ENCODE measurements at regions of chr6 and their contacts with region 1.

Region 1: GRCh38 chr6:75208298-75209183 is 2.7 kb upstream of the COL12A1 start:
- DNase-seq: peak; percentile 83
- H3K4me3 ChIP-seq: peak overlapping the region; percentile 60
- H3K27ac ChIP-seq: peak overlapping the region; percentile 63
- H3K4me1 ChIP-seq: peaks cover 80% of the 10 kb centered on the region
- H3K27me3 ChIP-seq: peaks cover 51% of the 10 kb centered on the region
- CTCF ChIP-seq: peak; percentile 88

Region 2: GRCh38 chr6:73739096-73739495 is 1469.4 kb before region 1 on chr6:
- intact Hi-C with region 1: loop called (anchors 5 kb)
- DNase-seq: no peak
- H3K4me3 ChIP-seq: no peak overlapping the region
- H3K27ac ChIP-seq: peak overlapping the region; percentile 47
- H3K4me1 ChIP-seq: peaks cover 12% of the 10 kb centered on the region
- H3K27me3 ChIP-seq: no peaks in the 10 kb centered on the region
- CTCF ChIP-seq: peak; percentile 83

Region 3: DNA sequence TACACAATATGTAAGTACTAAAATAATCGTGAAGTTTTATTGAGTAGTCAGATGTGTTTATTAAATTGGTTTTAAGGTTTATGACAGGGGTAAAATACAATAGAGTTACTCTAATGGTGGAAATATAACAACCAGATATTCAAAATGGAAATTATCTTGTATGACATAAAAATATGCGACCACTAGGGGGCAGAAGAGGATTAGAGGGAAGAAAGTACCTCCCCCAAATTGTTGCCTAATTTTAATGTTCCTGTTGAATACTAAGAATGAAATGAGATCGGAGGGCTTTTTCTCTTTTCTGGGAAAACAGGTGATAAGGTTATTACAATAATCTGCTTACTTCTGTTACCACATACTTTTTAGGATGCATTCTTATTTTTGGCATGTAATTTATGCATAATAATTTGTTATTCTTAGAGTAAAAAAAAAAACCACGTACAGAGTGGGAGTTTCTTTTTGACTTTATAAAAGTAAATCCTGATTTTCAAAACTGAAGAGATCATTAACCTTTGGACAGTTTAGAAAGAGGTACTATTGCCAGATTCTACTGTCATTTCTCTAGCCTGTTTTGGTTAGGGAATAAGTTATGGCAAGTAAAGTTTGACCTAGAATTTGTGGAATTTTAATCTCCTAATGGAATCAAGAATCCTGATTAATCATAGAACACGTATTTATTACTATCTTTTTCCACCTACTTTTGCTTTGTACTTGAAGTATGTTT is 1353.4 kb before region 1 on chr6:
- intact Hi-C with region 1: loop called (anchors 10 kb)
- DNase-seq: no peak
- H3K4me3 ChIP-seq: peak overlapping the region; percentile 16
- H3K27ac ChIP-seq: peak overlapping the region; percentile 31
- H3K4me1 ChIP-seq: peaks cover 2% of the 10 kb centered on the region
- H3K27me3 ChIP-seq: no peaks in the 10 kb centered on the region
- CTCF ChIP-seq: peak; percentile 74